Activated naive CD4-positive, alpha-beta T cell treated with anti-CD3 and anti-CD28 coated beads for 36 hours (primary cell): ENCODE measurements at regions of chr1 and their contacts with region 1.

Region 1: DNA sequence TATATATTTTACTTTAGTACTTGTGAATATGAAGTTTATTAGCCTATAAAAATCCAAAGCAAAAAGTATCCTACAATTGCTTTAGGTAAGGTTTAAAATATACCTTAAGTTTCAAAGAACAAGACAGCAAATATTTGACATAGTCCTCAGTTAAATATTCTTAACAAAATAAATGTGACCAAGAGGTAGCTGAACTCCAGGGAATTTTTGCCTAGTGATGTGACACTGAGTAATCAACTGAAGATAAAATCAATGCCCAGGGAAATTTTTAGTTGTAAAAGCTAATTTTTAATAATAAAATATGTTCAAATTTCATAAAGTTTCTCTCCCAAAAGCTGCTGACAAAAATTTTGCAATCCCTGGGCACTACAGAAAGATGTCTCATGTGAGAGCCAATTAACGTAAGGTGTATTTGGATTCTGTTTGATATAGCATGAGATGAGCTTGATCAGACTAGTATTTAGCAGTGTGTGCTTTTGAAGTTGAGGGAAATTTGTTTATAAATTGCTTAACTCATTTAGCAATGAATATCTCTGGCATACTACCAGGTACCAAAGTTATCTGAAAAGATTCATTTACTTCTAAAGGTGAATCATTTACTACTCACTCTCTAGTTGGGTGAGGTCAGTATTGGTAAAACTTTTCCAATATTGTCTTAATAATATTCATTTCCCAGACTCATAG is 80.2 kb upstream of the PALMD start:
- DNase-seq: no peak
- H3K4me3 Mint-ChIP-seq: no peak overlapping the region
- H3K27ac Mint-ChIP-seq: no peak overlapping the region
- H3K4me1 Mint-ChIP-seq: no peaks in the 10 kb centered on the region
- H3K27me3 Mint-ChIP-seq: peaks cover 6% of the 10 kb centered on the region

Region 2: GRCh38 chr1:97849345-97850340 is 1716.1 kb before region 1 on chr1:
- CTCF ChIA-PET with region 1: no interaction called
- intact Hi-C with region 1: loop called (anchors 10 kb)
- DNase-seq: no peak
- H3K4me3 Mint-ChIP-seq: peak overlapping the region; percentile 12
- H3K27ac Mint-ChIP-seq: no peak overlapping the region
- H3K4me1 Mint-ChIP-seq: peaks cover 24% of the 10 kb centered on the region
- H3K27me3 Mint-ChIP-seq: no peaks in the 10 kb centered on the region